BJ (cell line): ENCODE measurements at regions of chr7 and their contacts with region 1.

Region 1: GRCh38 chr7:101066141-101066832 is 19.0 kb upstream of the TRIM56 start:
- DNase-seq: no peak
- H3K4me3 ChIP-seq: no peak overlapping the region
- H3K27me3 ChIP-seq: peaks cover 9% of the 10 kb centered on the region
- CTCF ChIP-seq: no peak

Region 2: DNA sequence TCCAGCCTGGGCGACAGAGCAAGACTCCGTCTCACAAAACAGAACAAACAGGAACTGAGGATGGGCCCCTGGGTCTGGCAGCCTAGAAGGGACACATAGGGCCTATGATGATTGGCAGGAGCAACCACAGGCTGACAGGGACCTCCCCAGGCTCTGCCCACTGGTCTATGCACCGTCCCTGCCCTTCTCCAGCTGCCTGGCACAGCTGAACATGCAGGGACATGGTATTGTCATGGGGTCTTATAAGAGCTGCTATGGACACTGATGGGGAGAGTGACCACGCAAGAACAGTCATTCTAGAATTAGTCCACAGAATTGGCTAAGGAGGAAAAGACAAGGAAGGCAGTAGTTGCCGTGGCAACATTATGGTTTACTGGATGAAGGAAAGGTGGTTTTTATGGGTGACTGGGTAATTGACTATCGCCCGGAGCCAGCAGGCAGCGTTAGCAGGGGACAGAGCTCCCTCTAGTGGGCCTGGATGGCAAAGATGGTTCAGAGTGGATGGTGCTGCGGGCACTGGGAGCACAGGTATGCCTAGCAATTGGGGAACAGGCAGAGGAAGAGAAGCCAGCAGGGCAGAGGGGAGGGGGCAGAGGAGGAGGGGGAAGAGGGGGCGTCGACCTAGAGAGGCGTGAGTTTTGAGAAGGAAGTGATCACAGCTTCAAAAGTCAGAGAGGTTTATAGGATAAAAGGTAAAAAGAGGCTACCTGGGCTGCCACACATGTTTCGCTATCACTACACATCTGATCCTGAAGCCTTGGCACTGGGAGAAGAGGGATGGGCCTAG is 11.2 kb after region 1 on chr7:
- CTCF ChIA-PET with region 1: interaction called, 22 read pairs
- POLR2A ChIA-PET with region 1: no interaction called
- DNase-seq: no peak
- H3K4me3 ChIP-seq: no peak overlapping the region
- H3K27me3 ChIP-seq: no peaks in the 10 kb centered on the region; the same call in 1 of the 2 replicates
- CTCF ChIP-seq: peak; percentile 98

Region 3: GRCh38 chr7:101542527-101543241 is 476.4 kb after region 1 on chr7:
- CTCF ChIA-PET with region 1: no interaction called
- POLR2A ChIA-PET with region 1: no interaction called
- DNase-seq: no peak
- H3K4me3 ChIP-seq: no peak overlapping the region
- H3K27me3 ChIP-seq: peaks cover 1% of the 10 kb centered on the region
- CTCF ChIP-seq: peak; percentile 87